Caco-2 (cell line): ENCODE measurements at regions of chr4 and their contacts with region 1.

Region 1: GRCh38 chr4:74531963-74532794 is 87.2 kb downstream of the AREG start:
- DNase-seq: peak; percentile 53 to 76
- H3K4me3 ChIP-seq: no peak overlapping the region
- H3K4me3 Mint-ChIP-seq: peak overlapping the region; percentile 15
- H3K27ac Mint-ChIP-seq: peak overlapping the region; percentile 93
- H3K4me1 ChIP-seq: peaks cover 77% of the 10 kb centered on the region
- H3K4me1 Mint-ChIP-seq: peaks cover 46% of the 10 kb centered on the region
- H3K27me3 ChIP-seq: no peaks in the 10 kb centered on the region
- H3K27me3 Mint-ChIP-seq: no peaks in the 10 kb centered on the region
- CTCF ChIP-seq: peak; percentile 57 to 71

Region 2: DNA sequence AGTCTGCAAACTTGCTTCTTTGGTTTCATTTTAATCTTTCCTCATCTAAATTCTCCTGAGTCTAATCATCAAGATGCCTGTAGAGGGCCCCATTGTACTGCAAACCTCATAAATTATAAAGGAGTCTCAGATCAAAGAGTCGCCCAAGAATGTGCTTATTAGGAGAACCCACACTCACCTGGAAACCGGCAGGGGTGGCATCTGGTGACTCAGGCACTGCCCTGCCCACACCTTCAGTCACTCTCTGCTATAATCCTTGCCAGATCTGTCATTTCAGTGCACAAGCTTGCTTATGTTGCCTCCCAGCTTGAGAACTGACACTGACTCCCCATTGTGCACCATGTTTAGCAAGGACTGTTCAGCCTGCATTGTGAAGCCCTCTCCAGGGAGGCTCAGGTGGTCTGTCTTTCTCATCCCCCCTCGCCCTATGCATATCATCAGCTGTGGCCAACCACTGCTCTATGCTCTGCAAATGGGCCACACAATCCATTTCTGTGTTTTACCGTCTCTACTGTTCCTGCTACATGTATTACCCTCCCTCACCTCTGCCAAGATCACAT is 211.5 kb before region 1 on chr4:
- CTCF ChIA-PET with region 1: no interaction called
- POLR2A ChIA-PET with region 1: no interaction called
- intact Hi-C with region 1: loop called (anchors 2 kb)
- DNase-seq: peak; percentile 66 to 72
- H3K4me3 ChIP-seq: no peak overlapping the region
- H3K4me3 Mint-ChIP-seq: peak overlapping the region; percentile 1
- H3K27ac Mint-ChIP-seq: no peak overlapping the region
- H3K4me1 ChIP-seq: peaks cover 17% of the 10 kb centered on the region; the same call in 1 of the 2 replicates
- H3K4me1 Mint-ChIP-seq: peaks cover 10% of the 10 kb centered on the region
- H3K27me3 ChIP-seq: no peaks in the 10 kb centered on the region
- H3K27me3 Mint-ChIP-seq: no peaks in the 10 kb centered on the region
- CTCF ChIP-seq: peak; percentile 48 to 66

Region 3: DNA sequence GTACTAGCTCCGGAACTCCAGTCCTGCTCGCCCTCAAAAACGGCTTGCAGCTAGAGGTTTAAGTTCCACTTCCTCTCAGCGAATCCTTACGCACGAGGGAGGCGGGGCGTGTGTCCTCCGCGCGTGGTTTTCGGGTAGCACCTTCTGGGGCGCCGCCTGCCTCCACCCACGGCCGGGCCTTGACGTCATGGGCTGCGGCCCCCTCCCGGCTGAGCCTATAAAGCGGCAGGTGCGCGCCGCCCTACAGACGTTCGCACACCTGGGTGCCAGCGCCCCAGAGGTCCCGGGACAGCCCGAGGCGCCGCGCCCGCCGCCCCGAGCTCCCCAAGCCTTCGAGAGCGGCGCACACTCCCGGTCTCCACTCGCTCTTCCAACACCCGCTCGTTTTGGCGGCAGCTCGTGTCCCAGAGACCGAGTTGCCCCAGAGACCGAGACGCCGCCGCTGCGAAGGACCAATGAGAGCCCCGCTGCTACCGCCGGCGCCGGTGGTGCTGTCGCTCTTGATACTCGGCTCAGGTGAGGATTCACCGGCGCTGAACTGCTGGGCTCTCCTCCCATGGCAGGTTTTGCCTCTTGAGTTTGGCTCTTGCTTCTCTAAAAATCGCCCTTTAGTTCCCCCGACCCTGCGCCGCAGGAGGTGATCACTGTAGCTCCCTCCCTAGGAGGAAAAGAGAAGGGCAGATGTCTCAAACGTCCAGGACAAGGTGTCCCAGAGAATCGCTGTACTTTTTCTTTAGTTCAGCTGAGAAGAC is 87.1 kb before region 1 on chr4 and contains the start of gene AREG:
- CTCF ChIA-PET with region 1: interaction called, 4 read pairs
- POLR2A ChIA-PET with region 1: interaction called, 3 read pairs
- intact Hi-C with region 1: loop called (anchors 1 kb)
- DNase-seq: peak; percentile 85 to 88
- H3K4me3 ChIP-seq: peak within 1 kb of the TSS; percentile 82
- H3K4me3 Mint-ChIP-seq: peak within 1 kb of the TSS; percentile 86
- H3K27ac Mint-ChIP-seq: peak within 1 kb of the TSS; percentile 73
- H3K4me1 ChIP-seq: peaks cover 8% of the 10 kb centered on the region
- H3K4me1 Mint-ChIP-seq: peaks cover 6% of the 10 kb centered on the region
- H3K27me3 ChIP-seq: no peaks in the 10 kb centered on the region
- H3K27me3 Mint-ChIP-seq: no peaks in the 10 kb centered on the region
- CTCF ChIP-seq: peak; percentile 43 to 68
- total RNA-seq, gene AREG: 146 and 162 TPM in 2 replicates

Region 4: DNA sequence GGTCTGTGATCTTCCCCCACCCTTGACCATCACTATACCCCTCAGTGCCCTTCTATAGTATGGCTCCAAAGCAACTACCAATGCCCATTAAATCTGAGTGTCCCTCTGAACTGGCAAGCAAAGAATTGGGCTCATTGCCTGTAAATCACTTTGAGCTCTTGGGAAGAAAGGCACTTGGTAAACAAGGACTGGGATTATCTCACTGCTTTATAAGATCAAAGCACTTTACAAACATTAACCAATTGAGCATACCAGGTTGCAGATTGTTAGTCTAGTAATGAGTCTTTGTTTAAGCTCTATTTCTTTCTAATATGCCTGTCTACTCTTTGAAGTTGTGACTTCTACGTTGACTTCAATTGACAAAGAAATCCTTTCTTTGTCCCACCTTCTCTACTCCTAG is 53.2 kb before region 1 on chr4:
- CTCF ChIA-PET with region 1: interaction called, 6 read pairs
- POLR2A ChIA-PET with region 1: no interaction called
- intact Hi-C with region 1: loop called (anchors 2 kb)
- DNase-seq: peak in 1 of 2 experiments; percentile 52
- H3K4me3 ChIP-seq: no peak overlapping the region
- H3K4me3 Mint-ChIP-seq: peak overlapping the region; percentile 57
- H3K27ac Mint-ChIP-seq: peak overlapping the region; percentile 85
- H3K4me1 ChIP-seq: peaks cover 55% of the 10 kb centered on the region
- H3K4me1 Mint-ChIP-seq: peaks cover 53% of the 10 kb centered on the region
- H3K27me3 ChIP-seq: no peaks in the 10 kb centered on the region
- H3K27me3 Mint-ChIP-seq: no peaks in the 10 kb centered on the region
- CTCF ChIP-seq: no peak

Region 5: GRCh38 chr4:74675673-74676279 is 143.6 kb after region 1 on chr4:
- CTCF ChIA-PET with region 1: interaction called, 9 read pairs
- POLR2A ChIA-PET with region 1: no interaction called
- intact Hi-C with region 1: loop called (anchors 1 kb)
- DNase-seq: peak in 1 of 2 experiments; percentile 71
- H3K4me3 ChIP-seq: no peak overlapping the region
- H3K4me3 Mint-ChIP-seq: peak overlapping the region; percentile 8
- H3K27ac Mint-ChIP-seq: no peak overlapping the region
- H3K4me1 ChIP-seq: peaks cover 3% of the 10 kb centered on the region
- H3K4me1 Mint-ChIP-seq: peaks cover 14% of the 10 kb centered on the region
- H3K27me3 ChIP-seq: no peaks in the 10 kb centered on the region
- H3K27me3 Mint-ChIP-seq: no peaks in the 10 kb centered on the region
- CTCF ChIP-seq: peak; percentile 62 to 79